ENCODE measurements at regions of chrX and their contacts with region 1.

Region 1: GRCh38 chrX:819684-820083 is 189.1 kb downstream of the SHOX start:
- DNase-seq: no peak
- ATAC-seq: no peak
- H3K4me3 ChIP-seq: no peak overlapping the region
- H3K27ac ChIP-seq: no peak overlapping the region
- H3K4me1 ChIP-seq: no peaks in the 10 kb centered on the region
- H3K27me3 ChIP-seq: no peaks in the 10 kb centered on the region
- CTCF ChIP-seq: no peak
- POLR2A ChIP-seq: no peak

Region 2: GRCh38 chrX:866441-866990 is 46.8 kb after region 1 on chrX:
- intact Hi-C with region 1: loop called in 1 of 10 experiments (anchors 5 kb)
- DNase-seq: no peak
- ATAC-seq: no peak
- H3K4me3 ChIP-seq: no peak overlapping the region
- H3K27ac ChIP-seq: no peak overlapping the region
- H3K4me1 ChIP-seq: no peaks in the 10 kb centered on the region
- H3K27me3 ChIP-seq: no peaks in the 10 kb centered on the region
- CTCF ChIP-seq: no peak
- POLR2A ChIP-seq: no peak

Measured in heart left ventricle (tissue), 16 donors.